SK-N-SH (cell line): ENCODE measurements at regions of chr14 and their contacts with region 1.

Region 1: GRCh38 chr14:99563233-99564129 is 40.5 kb downstream of the CCDC85C start:
- DNase-seq: peak; percentile 84
- H3K4me3 ChIP-seq: no peak overlapping the region
- H3K27ac ChIP-seq: peak overlapping the region in 1 of 2 experiments; percentile 99; a peak in 2 of 4 replicates
- H3K4me1 ChIP-seq: peaks cover 43 to 91% of the 10 kb centered on the region in 2 experiments
- H3K27me3 ChIP-seq: no peaks in the 10 kb centered on the region
- CTCF ChIP-seq: peak; percentile 64
- EP300 ChIP-seq: peak in 1 of 2 experiments; percentile 58; a peak in 3 of 4 replicates
- RAD21 ChIP-seq: peak; percentile 70

Region 2: DNA sequence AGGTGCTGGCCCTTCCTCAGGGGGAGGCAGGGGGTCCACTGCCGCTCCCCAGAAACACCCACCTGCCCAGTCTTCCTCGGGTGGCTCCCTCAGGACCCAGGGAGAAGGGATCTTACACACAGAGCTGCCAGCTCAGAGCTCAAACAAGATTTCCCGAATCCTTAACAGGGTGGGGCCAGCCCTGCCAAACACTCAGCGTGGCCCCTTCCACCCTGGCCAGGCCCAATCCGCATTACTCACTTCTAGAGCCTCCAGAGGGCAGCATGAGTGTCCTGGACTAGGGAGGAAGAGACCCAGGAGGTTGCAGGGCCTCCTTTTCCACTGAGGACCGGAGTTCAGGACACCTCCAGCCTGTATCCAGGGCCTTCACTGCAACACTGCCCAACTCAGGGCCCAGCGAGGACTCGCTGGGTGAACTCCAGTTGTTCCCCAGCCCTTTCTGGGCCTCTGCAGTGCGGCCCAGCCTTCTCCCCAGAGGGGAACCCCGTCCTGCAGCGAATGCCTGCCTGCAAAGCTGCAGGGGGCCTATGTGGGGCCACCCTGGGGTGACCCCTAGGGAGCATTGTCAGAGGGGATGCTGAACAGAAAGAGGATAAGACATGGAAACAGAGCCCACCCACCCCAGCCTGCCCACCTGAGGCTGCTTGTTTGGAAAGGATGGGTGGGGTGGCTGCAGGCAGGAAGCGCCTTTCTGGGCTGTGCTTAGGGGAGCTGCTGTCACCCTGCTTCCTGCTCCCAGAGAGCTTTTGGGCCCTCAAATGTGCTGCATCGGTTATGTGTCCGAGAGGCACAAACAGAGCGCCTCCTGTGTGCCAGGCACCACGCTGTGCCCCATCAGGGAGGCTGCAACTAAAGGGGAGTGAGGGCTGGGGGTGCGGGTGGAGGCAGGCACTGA is 38.4 kb before region 1 on chr14:
- CTCF ChIA-PET with region 1: interaction called, 14 read pairs
- POLR2A ChIA-PET with region 1: interaction called, 4 read pairs
- DNase-seq: peak; percentile 57
- H3K4me3 ChIP-seq: no peak overlapping the region
- H3K27ac ChIP-seq: no peak overlapping the region; a peak in 1 of 4 replicates
- H3K4me1 ChIP-seq: peaks cover 13 to 54% of the 10 kb centered on the region in 2 experiments; a peak in 3 of 4 replicates
- H3K27me3 ChIP-seq: no peaks in the 10 kb centered on the region
- CTCF ChIP-seq: peak; percentile 44
- EP300 ChIP-seq: no peak
- RAD21 ChIP-seq: peak; percentile 57

Region 3: GRCh38 chr14:99538275-99538674 is 25.2 kb before region 1 on chr14:
- CTCF ChIA-PET with region 1: interaction called, 14 read pairs
- POLR2A ChIA-PET with region 1: interaction called, 11 read pairs
- DNase-seq: peak; percentile 65
- H3K4me3 ChIP-seq: no peak overlapping the region
- H3K27ac ChIP-seq: peak overlapping the region; percentile 62 to 67; a peak in 3 of 4 replicates
- H3K4me1 ChIP-seq: peaks cover 34 to 74% of the 10 kb centered on the region in 2 experiments; a peak in 3 of 4 replicates
- H3K27me3 ChIP-seq: no peaks in the 10 kb centered on the region
- CTCF ChIP-seq: peak; percentile 37; the same call in 1 of the 2 replicates
- EP300 ChIP-seq: no peak
- RAD21 ChIP-seq: no peak

Region 4: DNA sequence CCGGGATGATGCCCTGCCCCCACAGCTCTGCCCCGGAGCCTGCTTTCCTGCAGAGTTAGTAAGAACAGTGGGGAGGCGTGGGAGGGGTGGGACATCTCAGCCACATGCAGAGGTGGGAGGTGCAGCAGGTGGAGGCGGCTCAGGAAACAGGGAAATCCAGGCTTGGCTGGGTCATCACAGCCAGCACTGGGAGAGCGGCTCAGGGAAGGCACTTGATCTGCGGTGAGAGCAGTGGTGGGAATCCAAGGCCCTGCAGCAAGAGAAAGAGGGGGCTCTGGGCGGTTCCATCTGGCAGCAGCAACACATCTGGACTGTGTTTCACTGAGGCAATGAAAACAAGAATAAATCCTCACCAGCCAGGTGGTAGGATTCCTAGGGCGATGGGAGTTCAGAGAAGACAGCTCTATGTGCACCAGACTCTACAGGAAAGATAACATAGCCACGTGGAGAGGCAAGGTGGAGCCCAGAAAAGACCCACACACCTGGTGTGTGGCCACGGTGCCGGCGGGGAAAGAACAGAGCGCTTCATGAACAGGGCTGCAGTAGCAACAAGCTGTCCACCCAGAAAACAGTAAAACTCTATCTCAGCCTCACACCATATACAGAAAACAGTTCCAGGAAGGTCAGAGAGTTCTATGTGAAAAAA is 17.1 kb before region 1 on chr14:
- CTCF ChIA-PET with region 1: interaction called, 11 read pairs
- POLR2A ChIA-PET with region 1: interaction called, 11 read pairs
- DNase-seq: peak; percentile 80
- H3K4me3 ChIP-seq: no peak overlapping the region
- H3K27ac ChIP-seq: peak overlapping the region in 1 of 2 experiments; percentile 64; a peak in 1 of 4 replicates
- H3K4me1 ChIP-seq: peaks cover 7 to 85% of the 10 kb centered on the region in 2 experiments; a peak in 3 of 4 replicates
- H3K27me3 ChIP-seq: no peaks in the 10 kb centered on the region
- CTCF ChIP-seq: no peak
- EP300 ChIP-seq: peak in 1 of 2 experiments; percentile 71; a peak in 2 of 4 replicates
- RAD21 ChIP-seq: no peak

Region 5: GRCh38 chr14:99575043-99576023 is 11.9 kb after region 1 on chr14:
- CTCF ChIA-PET with region 1: interaction called, 30 read pairs
- POLR2A ChIA-PET with region 1: interaction called, 14 read pairs
- DNase-seq: peak; percentile 71
- H3K4me3 ChIP-seq: no peak overlapping the region
- H3K27ac ChIP-seq: peak overlapping the region; percentile 53 to 95
- H3K4me1 ChIP-seq: peaks cover 51 to 99% of the 10 kb centered on the region in 2 experiments
- H3K27me3 ChIP-seq: no peaks in the 10 kb centered on the region
- CTCF ChIP-seq: peak; percentile 40
- EP300 ChIP-seq: peak; percentile 42 to 59; a peak in 2 of 4 replicates
- RAD21 ChIP-seq: peak; percentile 51

Region 6: DNA sequence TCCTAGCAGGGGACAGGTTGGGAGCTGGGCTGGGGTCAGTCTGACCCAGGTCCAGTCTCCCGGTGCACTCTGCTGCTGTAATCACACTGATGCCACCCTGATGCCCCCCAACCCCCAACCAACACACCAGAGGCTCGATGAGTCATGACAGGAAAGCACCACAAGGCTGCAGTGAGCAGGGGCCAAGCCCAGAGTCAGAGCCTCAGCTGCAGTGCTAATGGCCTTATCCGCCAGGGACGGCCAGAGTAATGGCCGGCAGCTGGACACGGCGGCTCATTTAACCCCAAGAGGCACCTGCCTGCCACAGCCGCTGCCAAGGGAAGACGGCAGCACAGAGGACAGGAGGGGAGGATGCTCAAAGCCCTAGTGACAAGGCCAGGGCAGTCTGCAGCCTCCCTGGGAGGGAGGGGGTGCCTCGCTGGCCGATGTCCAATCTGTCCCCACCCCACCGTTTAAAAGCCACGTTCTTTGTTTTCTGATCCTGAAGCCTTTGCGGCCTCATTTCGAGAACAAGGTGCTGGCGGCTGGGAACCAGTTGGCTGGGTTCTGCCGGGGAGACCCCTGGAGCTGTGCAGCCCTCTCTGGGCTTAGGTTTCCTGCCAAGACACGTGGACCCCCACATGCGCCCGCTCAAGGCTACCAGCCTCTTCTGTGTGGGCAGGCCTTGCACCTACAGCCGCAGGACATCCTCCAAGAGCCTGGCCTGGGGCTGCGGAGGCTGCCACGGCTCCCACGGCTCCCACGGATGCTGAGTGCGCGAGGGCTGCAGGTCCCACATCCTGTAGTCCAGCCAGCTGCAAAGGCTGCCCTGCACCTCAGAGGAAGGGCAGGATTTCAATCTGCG is 27.5 kb after region 1 on chr14:
- CTCF ChIA-PET with region 1: interaction called, 11 read pairs
- POLR2A ChIA-PET with region 1: no interaction called
- DNase-seq: peak; percentile 88
- H3K4me3 ChIP-seq: no peak overlapping the region; a peak in 2 of 4 replicates
- H3K27ac ChIP-seq: peak overlapping the region; percentile 33 to 95; a peak in 3 of 4 replicates
- H3K4me1 ChIP-seq: peaks cover 28 to 91% of the 10 kb centered on the region in 2 experiments
- H3K27me3 ChIP-seq: no peaks in the 10 kb centered on the region
- CTCF ChIP-seq: no peak
- EP300 ChIP-seq: no peak; a peak in 1 of 4 replicates
- RAD21 ChIP-seq: peak; percentile 34

Region 7: GRCh38 chr14:99604283-99604765 is 40.8 kb after region 1 on chr14:
- CTCF ChIA-PET with region 1: interaction called, 37 read pairs
- POLR2A ChIA-PET with region 1: interaction called, 14 read pairs
- DNase-seq: peak; percentile 100
- H3K4me3 ChIP-seq: peak overlapping the region; percentile 89 to 90
- H3K27ac ChIP-seq: peak overlapping the region; percentile 82 to 96
- H3K4me1 ChIP-seq: peaks cover 22 to 53% of the 10 kb centered on the region in 2 experiments
- H3K27me3 ChIP-seq: no peaks in the 10 kb centered on the region
- CTCF ChIP-seq: no peak
- EP300 ChIP-seq: no peak
- RAD21 ChIP-seq: no peak